AG04449 (cell line): ENCODE measurements at regions of chr3 and their contacts with region 1.

Region 1: DNA sequence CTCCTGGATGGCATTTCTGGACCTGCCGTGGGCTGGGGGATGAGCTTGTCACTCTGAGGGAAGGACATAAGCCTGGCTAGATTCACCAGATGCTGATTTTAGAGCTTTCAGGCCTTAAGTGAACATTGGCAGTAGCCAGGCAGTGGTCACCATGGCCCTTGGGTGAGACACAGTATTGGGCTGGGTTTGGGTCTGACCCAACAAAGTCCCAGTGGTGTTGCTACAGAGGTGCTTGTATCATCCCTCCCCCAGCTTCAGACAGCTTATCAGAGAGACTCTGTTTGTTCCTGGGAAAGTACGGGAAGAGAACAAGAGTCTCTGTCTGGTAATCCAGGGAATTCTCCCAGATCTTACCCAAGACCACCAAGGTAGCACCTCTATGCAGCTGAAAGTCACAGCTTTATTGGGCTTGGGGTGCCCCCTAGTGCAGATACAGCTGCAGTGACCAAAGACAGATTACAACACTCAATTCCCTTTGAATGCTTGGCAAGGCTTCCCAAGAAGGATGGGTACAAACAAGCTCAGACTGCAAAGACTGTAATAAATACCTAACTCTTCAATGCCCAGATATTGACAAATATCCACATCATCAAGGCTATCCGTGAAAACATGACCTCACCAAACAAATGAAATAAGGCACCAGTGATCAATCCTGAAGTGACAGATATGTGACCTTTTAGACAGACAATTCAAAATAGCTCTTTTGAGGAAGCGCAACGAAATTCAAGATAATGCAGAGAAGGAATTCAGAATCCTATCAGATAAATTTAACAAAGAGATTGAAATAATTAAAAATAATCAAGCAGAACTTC is 9.9 kb upstream of the RUVBL1 start:
- DNase-seq: no peak
- H3K4me3 ChIP-seq: no peak overlapping the region
- CTCF ChIP-seq: peak; percentile 71

Region 2: DNA sequence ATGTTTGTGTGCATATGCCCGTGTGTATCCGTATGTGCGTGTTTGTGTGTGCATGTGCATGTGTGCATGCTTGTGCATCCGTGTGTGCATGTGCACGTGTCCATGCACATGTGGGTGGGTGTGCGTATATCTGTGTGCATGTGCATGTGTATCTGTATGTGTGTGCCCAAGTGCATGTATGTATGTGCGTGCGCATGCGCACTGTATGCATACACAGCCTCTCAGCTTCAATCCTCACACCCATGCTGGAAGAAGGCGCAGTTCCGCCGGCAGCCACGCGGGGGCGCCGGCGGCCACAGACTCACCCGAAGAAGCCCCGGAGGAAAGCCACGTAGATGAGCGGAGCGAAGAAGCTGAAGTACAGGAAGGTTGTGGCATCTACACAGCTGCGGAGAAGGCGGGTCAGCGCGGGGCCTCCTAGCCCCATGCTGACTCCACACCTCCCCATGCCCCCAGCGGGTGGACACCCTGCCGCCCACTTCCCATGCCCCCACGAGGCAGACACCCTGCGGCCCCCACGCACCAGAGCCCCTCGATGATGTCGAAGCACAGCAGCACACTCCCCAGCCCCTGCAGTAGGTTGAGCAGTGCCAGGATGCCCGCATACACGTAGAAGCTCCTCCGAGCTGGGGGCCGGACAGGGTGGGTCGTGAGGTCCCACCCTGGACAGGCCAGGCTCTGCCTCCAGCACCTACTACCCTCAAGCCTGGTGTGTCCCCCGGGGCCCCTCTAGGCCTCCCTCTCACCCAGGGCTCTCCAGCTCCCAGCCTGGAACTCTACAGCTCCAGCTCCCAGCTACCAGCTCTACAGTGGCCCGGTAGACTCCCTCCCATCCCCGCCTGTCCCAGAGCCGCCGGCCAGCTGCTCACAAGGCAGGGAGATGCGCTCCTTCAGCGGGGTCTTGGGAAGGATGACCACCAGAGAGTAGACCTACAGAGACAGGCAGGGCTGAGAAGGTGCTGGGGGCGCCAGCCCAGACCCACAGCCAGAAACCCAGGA is 558.3 kb before region 1 on chr3:
- CTCF ChIA-PET with region 1: interaction called, 12 read pairs
- POLR2A ChIA-PET with region 1: no interaction called
- DNase-seq: no peak
- H3K4me3 ChIP-seq: no peak overlapping the region
- CTCF ChIP-seq: peak; percentile 95

Region 3: DNA sequence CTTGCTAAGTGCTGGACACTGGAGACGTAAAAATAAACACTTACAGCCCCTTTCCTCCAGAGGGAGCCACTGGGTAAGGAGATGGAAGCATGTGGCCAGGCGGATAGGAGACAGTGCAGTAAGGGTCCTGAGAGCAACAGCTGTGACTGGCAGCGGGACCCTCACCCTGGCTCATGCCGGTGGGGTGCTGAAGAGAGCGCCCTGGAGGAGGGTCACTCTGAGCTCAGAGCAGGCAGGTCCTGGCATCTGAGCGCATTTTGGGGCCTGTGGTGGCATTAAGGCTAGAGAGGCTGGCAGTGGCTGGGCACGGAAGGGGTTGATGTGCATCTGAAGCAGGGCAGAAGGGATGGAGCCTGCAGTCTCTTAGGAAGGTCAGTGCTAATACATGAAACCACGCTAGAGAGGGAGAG is 65.3 kb before region 1 on chr3:
- CTCF ChIA-PET with region 1: interaction called, 27 read pairs
- POLR2A ChIA-PET with region 1: no interaction called
- DNase-seq: no peak
- H3K4me3 ChIP-seq: no peak overlapping the region
- CTCF ChIP-seq: peak; percentile 60

Region 4: GRCh38 chr3:128081846-128082245 is 51.6 kb before region 1 on chr3:
- CTCF ChIA-PET with region 1: interaction called, 18 read pairs
- POLR2A ChIA-PET with region 1: no interaction called
- DNase-seq: no peak
- H3K4me3 ChIP-seq: no peak overlapping the region
- CTCF ChIP-seq: no peak

Region 5: GRCh38 chr3:128112357-128112968 is 21.0 kb before region 1 on chr3:
- CTCF ChIA-PET with region 1: interaction called, 16 read pairs
- POLR2A ChIA-PET with region 1: no interaction called
- DNase-seq: peak; percentile 58
- H3K4me3 ChIP-seq: no peak overlapping the region
- CTCF ChIP-seq: no peak